Activated naive CD4-positive, alpha-beta T cell treated with anti-CD3 and anti-CD28 coated beads for 36 hours (primary cell): ENCODE measurements at regions of chr19 and their contacts with region 1.

Region 1: GRCh38 chr19:45994989-45995714 is at the start of gene CCDC61:
- DNase-seq: peak; percentile 98
- H3K4me3 Mint-ChIP-seq: peak within 1 kb of the TSS; percentile 40
- H3K27ac Mint-ChIP-seq: no peak within 1 kb of the TSS
- H3K4me1 Mint-ChIP-seq: peaks cover 23% of the 10 kb centered on the region
- H3K27me3 Mint-ChIP-seq: no peaks in the 10 kb centered on the region
- total RNA-seq, gene CCDC61: 26.4 to 29.3 TPM

Region 2: GRCh38 chr19:45902651-45903625 is 92.2 kb before region 1 on chr19:
- CTCF ChIA-PET with region 1: no interaction called
- intact Hi-C with region 1: loop called (anchors 2 kb)
- DNase-seq: peak; percentile 99
- H3K4me3 Mint-ChIP-seq: peak overlapping the region; percentile 88
- H3K27ac Mint-ChIP-seq: peak overlapping the region; percentile 71
- H3K4me1 Mint-ChIP-seq: peaks cover 12% of the 10 kb centered on the region
- H3K27me3 Mint-ChIP-seq: no peaks in the 10 kb centered on the region

Region 3: DNA sequence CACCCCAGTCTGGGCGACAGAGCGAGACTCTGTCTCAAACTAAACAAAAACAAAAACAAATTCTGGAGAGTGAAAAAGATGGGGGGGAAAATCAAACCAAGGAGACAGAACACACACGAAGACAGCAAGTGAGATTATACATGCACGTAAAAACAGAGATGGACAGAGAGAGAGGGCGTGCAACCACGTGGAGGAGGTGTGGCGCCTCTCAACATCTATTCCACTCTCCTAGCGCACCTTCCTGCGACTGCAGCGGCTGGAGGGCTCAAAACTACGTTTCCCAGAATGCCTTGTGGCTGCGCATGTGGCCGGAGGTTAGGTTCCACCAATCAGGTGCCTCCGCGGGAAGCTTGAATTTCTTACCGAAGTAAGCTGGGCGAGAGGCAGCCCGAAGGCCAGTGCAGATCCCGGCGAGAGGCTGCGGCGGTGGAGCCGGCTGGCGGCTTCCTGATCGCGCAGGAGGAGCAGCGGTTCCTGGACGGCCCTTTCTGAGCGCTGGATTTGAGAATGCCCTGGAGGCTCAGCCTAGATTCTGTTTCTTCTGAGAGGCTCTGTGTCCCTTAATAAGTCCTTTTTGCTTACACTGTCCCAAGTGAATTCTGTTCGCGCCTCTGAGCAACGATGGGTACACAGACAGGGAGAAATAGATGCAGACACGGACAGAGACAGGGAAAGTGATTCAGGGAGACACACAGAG is 67.4 kb before region 1 on chr19:
- CTCF ChIA-PET with region 1: interaction called, 4 read pairs
- intact Hi-C with region 1: loop called (anchors 1 kb)
- DNase-seq: peak; percentile 96
- H3K4me3 Mint-ChIP-seq: peak overlapping the region; percentile 74
- H3K27ac Mint-ChIP-seq: no peak overlapping the region
- H3K4me1 Mint-ChIP-seq: peaks cover 7% of the 10 kb centered on the region
- H3K27me3 Mint-ChIP-seq: peaks cover 5% of the 10 kb centered on the region

Region 4: GRCh38 chr19:45981350-45981749 is 13.8 kb before region 1 on chr19:
- CTCF ChIA-PET with region 1: no interaction called
- intact Hi-C with region 1: no loop called
- DNase-seq: no peak
- H3K4me3 Mint-ChIP-seq: no peak overlapping the region
- H3K27ac Mint-ChIP-seq: no peak overlapping the region
- H3K4me1 Mint-ChIP-seq: no peaks in the 10 kb centered on the region
- H3K27me3 Mint-ChIP-seq: peaks cover 8% of the 10 kb centered on the region

Region 5: GRCh38 chr19:46016426-46017094 is 21.4 kb after region 1 on chr19:
- CTCF ChIA-PET with region 1: interaction called, 3 read pairs
- intact Hi-C with region 1: loop called (anchors 1 kb)
- DNase-seq: peak; percentile 86
- H3K4me3 Mint-ChIP-seq: peak overlapping the region; percentile 74
- H3K27ac Mint-ChIP-seq: peak overlapping the region; percentile 62
- H3K4me1 Mint-ChIP-seq: peaks cover 17% of the 10 kb centered on the region
- H3K27me3 Mint-ChIP-seq: peaks cover 15% of the 10 kb centered on the region

Region 6: DNA sequence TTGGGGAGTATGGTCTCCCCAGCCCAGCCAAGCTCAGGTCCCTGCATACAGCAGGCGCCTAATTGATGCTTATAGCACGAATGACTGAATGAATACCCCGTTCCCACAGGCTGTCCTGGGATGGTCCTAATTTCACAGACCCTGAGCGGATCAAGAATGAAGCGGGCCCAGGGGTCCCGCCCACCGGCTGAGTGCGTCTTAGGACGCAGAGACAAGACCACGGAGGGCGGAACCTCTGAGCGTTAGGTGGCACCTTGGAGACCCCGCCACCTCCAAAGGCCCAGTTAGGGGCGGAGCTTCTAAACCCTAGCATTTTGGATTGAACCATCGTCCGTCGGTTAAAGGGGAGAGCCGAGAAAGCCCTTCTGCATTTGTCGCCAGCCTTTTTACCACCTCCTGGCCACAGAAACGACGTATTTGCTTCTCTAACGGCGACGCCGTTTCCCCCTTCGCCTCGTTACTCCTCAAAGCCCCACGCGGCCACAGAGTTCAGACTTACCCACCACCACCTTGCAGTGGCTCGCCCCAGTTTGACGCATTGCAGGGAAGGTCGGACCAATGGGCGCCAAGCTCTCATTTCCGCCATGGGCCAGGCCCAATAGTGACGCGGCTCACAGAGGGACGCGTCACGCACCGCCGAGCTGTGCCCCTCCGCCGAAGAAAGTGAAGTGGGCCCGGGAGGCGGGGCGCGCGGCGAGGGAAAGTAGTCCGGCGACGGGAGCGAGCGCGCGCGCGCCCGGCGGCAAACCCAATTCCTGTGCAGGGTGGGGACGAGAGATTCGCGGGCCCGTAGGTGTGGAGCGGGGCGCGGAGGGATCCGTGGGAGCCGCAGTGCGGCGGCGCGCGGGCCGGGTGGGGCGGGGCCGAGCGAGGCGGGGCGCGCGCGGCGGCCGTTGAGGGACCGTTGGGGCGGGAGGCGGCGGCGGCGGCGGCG is 605.5 kb after region 1 on chr19:
- CTCF ChIA-PET with region 1: no interaction called
- intact Hi-C with region 1: loop called (anchors 1 kb)
- DNase-seq: peak; percentile 97
- H3K4me3 Mint-ChIP-seq: peak overlapping the region; percentile 96
- H3K27ac Mint-ChIP-seq: peak overlapping the region; percentile 100
- H3K4me1 Mint-ChIP-seq: peaks cover 32% of the 10 kb centered on the region
- H3K27me3 Mint-ChIP-seq: no peaks in the 10 kb centered on the region